ENCODE measurements at regions of chr19 and their contacts with region 1.

Region 1: DNA sequence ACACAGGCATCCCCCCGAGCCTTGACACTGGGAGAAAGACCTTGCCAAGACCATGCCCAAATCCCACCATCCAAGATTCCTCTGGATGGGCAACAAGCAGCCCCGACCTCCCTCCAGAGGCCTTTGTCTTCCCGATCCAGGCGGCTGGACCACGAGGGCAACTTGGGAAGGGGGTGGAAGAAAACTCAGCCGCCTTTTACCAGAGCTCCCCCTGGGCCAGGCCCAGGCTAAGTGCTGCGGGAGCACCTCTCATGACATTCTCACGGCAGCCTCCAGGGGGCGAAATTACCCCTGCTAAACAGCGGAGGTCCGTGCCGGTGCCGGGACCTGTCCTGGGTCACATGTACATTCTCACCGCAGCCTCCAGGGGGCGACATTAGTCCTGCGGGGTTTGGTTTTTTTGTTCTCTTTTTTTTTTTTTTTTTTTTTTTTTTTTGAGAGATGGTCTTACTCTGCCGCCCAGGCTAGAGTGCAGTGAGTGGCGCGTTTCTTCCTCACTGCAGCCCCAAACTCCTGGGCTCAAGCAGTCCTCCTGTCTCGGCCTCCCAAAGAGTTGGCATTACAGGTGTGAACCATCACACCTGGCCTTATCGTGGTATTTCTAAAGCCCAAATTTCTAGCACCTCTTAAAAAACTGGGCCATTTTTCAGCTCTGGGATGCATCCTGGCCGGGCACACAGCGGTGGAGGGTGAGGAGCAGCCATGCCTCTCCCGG is 2.1 kb upstream of the RSPH6A start:
- DNase-seq: peak; percentile 96 to 100
- ATAC-seq: peak; percentile 63 to 93
- H3K4me3 ChIP-seq: no peak overlapping the region
- H3K27ac ChIP-seq: peak overlapping the region in 1 of 2 experiments; percentile 61; a peak in 3 of 6 replicates
- H3K4me1 ChIP-seq: peaks cover 10% of the 10 kb centered on the region; the same call in 1 of the 3 replicates
- CTCF ChIP-seq: peak; percentile 100
- EP300 ChIP-seq: no peak
- POLR2A ChIP-seq: no peak
- RAD21 ChIP-seq: peak; percentile 80 to 85

Region 2: GRCh38 chr19:45842198-45842597 is 25.0 kb after region 1 on chr19:
- CTCF ChIA-PET with region 1: interaction called, 2,204 read pairs
- POLR2A ChIA-PET with region 1: no interaction called
- DNase-seq: no peak
- ATAC-seq: peak; percentile 29 to 40; a peak in 3 of 6 replicates
- H3K4me3 ChIP-seq: no peak overlapping the region
- H3K27ac ChIP-seq: no peak overlapping the region
- H3K4me1 ChIP-seq: no peaks in the 10 kb centered on the region
- CTCF ChIP-seq: no peak
- EP300 ChIP-seq: no peak
- POLR2A ChIP-seq: no peak
- RAD21 ChIP-seq: no peak

Region 3: DNA sequence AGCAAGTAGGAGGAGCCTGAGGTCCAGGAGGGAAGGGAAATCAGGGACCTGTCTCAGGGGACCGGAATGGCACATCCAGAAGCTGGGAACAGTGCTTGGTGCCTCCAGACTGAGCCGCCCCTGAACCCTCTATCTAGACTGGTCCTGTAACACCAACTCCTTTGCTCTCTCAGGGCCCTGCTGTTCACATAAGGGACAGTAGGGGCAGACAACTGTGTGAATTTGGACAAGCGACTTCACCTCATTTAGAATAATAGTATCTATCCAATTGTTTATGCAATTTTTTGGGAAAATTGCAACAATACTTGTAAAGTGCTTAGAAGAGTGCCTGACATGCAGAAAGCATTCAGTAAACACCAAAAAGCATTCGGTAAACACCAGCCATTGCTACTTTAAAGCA is 31.8 kb after region 1 on chr19:
- CTCF ChIA-PET with region 1: interaction called, 169 read pairs
- POLR2A ChIA-PET with region 1: no interaction called
- DNase-seq: peak; percentile 48 to 69
- ATAC-seq: peak; percentile 72 to 84
- H3K4me3 ChIP-seq: no peak overlapping the region
- H3K27ac ChIP-seq: no peak overlapping the region
- H3K4me1 ChIP-seq: no peaks in the 10 kb centered on the region
- CTCF ChIP-seq: no peak
- EP300 ChIP-seq: no peak
- POLR2A ChIP-seq: no peak
- RAD21 ChIP-seq: no peak

Region 4: GRCh38 chr19:45862564-45863334 is 45.6 kb after region 1 on chr19 and contains the start of gene SYMPK:
- CTCF ChIA-PET with region 1: interaction called, 169 read pairs
- POLR2A ChIA-PET with region 1: interaction called, 8 read pairs
- DNase-seq: peak; percentile 99 to 100
- ATAC-seq: peak; percentile 92 to 96
- H3K4me3 ChIP-seq: peak within 1 kb of the TSS; percentile 71
- H3K27ac ChIP-seq: peak within 1 kb of the TSS; percentile 88
- H3K4me1 ChIP-seq: peaks cover 25% of the 10 kb centered on the region
- CTCF ChIP-seq: no peak
- EP300 ChIP-seq: no peak; a peak in 1 of 5 replicates
- POLR2A ChIP-seq: peak; percentile 59
- RAD21 ChIP-seq: no peak
- polyA plus RNA-seq, gene SYMPK: 92.6 and 105 TPM in 2 replicates

Region 5: GRCh38 chr19:45872095-45872919 is 55.1 kb after region 1 on chr19:
- CTCF ChIA-PET with region 1: interaction called, 51 read pairs
- POLR2A ChIA-PET with region 1: no interaction called
- DNase-seq: no peak
- ATAC-seq: no peak
- H3K4me3 ChIP-seq: no peak overlapping the region
- H3K27ac ChIP-seq: no peak overlapping the region
- H3K4me1 ChIP-seq: no peaks in the 10 kb centered on the region
- CTCF ChIP-seq: no peak
- EP300 ChIP-seq: no peak
- POLR2A ChIP-seq: no peak
- RAD21 ChIP-seq: no peak

Region 6: GRCh38 chr19:45902651-45903625 is 85.8 kb after region 1 on chr19:
- CTCF ChIA-PET with region 1: interaction called, 11 read pairs
- POLR2A ChIA-PET with region 1: no interaction called
- DNase-seq: peak; percentile 98 to 100
- ATAC-seq: peak; percentile 86 to 95
- H3K4me3 ChIP-seq: peak overlapping the region; percentile 78
- H3K27ac ChIP-seq: peak overlapping the region; percentile 89 to 93
- H3K4me1 ChIP-seq: peaks cover 17% of the 10 kb centered on the region
- CTCF ChIP-seq: no peak
- EP300 ChIP-seq: no peak
- POLR2A ChIP-seq: peak; percentile 94
- RAD21 ChIP-seq: no peak

Region 7: GRCh38 chr19:46016426-46017094 is 199.4 kb after region 1 on chr19:
- CTCF ChIA-PET with region 1: interaction called, 13 read pairs
- POLR2A ChIA-PET with region 1: no interaction called
- DNase-seq: peak; percentile 84 to 87
- ATAC-seq: peak; percentile 69 to 85
- H3K4me3 ChIP-seq: peak overlapping the region; percentile 59
- H3K27ac ChIP-seq: peak overlapping the region; percentile 54 to 80; a peak in 5 of 6 replicates
- H3K4me1 ChIP-seq: peaks cover 20% of the 10 kb centered on the region
- CTCF ChIP-seq: peak; percentile 74
- EP300 ChIP-seq: no peak
- POLR2A ChIP-seq: no peak
- RAD21 ChIP-seq: peak; percentile 35 to 61; a peak in 4 of 5 replicates